ENCODE measurements at regions of chr6 and their contacts with region 1.

Region 1: GRCh38 chr6:52617087-52617486 is 40.2 kb upstream of the TRAM2 start:
- DNase-seq: no peak
- ATAC-seq: no peak
- H3K4me3 Mint-ChIP-seq: no peak overlapping the region
- H3K27ac Mint-ChIP-seq: no peak overlapping the region
- H3K4me1 Mint-ChIP-seq: no peaks in the 10 kb centered on the region
- H3K27me3 Mint-ChIP-seq: peaks cover 8% of the 10 kb centered on the region
- CTCF ChIP-seq: no peak

Region 2: DNA sequence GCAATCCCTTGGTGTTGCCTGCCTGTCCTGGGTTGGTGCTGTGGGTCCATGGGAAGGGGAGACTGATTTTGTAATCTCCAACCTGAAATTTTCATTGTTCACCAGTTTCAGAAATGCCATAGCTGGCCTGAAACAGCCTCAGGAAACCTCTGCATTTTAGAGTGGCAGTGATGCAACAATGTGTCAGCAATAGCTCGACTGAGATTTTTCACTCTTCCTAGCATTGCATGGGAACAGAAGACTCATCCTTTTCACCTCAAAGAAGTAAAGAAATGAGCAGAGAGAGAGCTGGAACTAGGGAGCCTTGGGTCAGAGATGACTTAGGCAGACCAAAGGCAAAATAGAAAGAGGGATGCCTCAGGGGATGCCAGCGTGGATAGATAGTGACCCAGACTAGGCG is 30.1 kb after region 1 on chr6:
- CTCF ChIA-PET with region 1: no interaction called
- POLR2A ChIA-PET with region 1: no interaction called
- intact Hi-C with region 1: loop called (anchors 5 kb)
- DNase-seq: no peak
- ATAC-seq: no peak
- H3K4me3 Mint-ChIP-seq: no peak overlapping the region
- H3K27ac Mint-ChIP-seq: no peak overlapping the region
- H3K4me1 Mint-ChIP-seq: peaks cover 6% of the 10 kb centered on the region
- H3K27me3 Mint-ChIP-seq: peaks cover 15% of the 10 kb centered on the region
- CTCF ChIP-seq: no peak

Measured in activated B cell treated with CpG ODN at 0.5 μM for 24 hours (primary cell).